A673 (cell line): ENCODE measurements at regions of chrX and their contacts with region 1.

Region 1: GRCh38 chrX:132968296-132968949 is 10.0 kb upstream of the HS6ST2 start:
- DNase-seq: no peak
- H3K4me3 ChIP-seq: no peak overlapping the region
- H3K27ac ChIP-seq: no peak overlapping the region
- H3K4me1 ChIP-seq: no peaks in the 10 kb centered on the region
- H3K27me3 ChIP-seq: no peaks in the 10 kb centered on the region
- CTCF ChIP-seq: no peak

Region 2: GRCh38 chrX:132740316-132741123 is 227.9 kb before region 1 on chrX:
- CTCF ChIA-PET with region 1: no interaction called
- POLR2A ChIA-PET with region 1: no interaction called
- intact Hi-C with region 1: loop called (anchors 10 kb)
- DNase-seq: peak; percentile 32
- H3K4me3 ChIP-seq: no peak overlapping the region
- H3K27ac ChIP-seq: no peak overlapping the region
- H3K4me1 ChIP-seq: no peaks in the 10 kb centered on the region
- H3K27me3 ChIP-seq: no peaks in the 10 kb centered on the region
- CTCF ChIP-seq: peak; percentile 77

Region 3: GRCh38 chrX:133415276-133416105 is 447.1 kb after region 1 on chrX and contains the start of gene GPC4:
- CTCF ChIA-PET with region 1: no interaction called
- POLR2A ChIA-PET with region 1: no interaction called
- intact Hi-C with region 1: no loop called
- DNase-seq: peak; percentile 81
- H3K4me3 ChIP-seq: peak within 1 kb of the TSS; percentile 65
- H3K27ac ChIP-seq: peak within 1 kb of the TSS; percentile 65
- H3K4me1 ChIP-seq: peaks cover under 1% of the 10 kb centered on the region
- H3K27me3 ChIP-seq: no peaks in the 10 kb centered on the region
- CTCF ChIP-seq: no peak
- total RNA-seq, gene GPC4: 17.8 and 19.4 TPM in 2 replicates